Astrocyte of the cerebellum (primary cell): ENCODE measurements at regions of chr7 and their contacts with region 1.

Region 1: DNA sequence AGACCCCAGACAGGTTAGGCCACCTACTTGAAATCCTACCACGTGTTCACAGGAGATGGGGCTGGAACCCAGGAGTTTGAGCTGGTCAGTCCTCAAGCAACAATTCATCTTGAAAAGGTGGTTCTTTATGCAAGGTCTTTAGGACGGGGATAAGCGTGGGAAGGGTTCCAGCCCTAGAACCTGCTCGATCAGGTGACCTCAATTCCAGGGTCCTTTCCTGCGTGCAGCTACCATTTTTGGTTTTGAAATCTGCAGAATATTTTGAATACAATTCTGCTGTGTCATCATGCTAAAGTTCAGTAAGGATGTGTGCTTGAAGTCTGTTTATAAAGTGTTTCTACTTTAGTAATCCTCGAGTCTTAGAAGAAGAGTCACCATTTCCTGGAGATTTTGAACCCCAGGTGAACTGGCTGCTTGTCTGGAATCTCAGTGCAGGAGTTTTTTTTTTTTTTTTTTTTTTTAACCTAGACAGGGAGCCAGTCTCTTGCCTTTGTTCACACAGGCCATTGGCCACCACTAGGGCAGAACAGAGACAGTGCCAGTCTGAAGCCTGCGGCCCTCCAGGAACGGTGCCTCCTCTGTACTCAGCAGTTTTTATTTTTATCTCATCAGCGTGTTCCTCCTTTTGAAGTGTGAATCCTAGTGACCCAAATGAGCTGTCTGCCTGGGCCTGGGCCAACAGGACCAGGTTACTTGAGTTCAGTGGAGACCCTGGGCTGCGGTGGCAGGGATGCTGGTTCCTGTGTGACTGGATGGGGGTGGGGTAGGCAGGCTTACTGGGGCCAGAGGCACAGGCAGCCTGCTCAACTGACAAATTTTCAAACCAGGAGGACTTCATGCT is 54.6 kb downstream of the EEPD1 start:
- DNase-seq: no peak
- H3K4me3 ChIP-seq: no peak overlapping the region
- CTCF ChIP-seq: no peak

Region 2: GRCh38 chr7:36128448-36129047 is 79.1 kb before region 1 on chr7:
- in situ Hi-C with region 1: no loop called
- DNase-seq: peak; percentile 93
- H3K4me3 ChIP-seq: no peak overlapping the region
- CTCF ChIP-seq: peak; percentile 61

Region 3: GRCh38 chr7:36250317-36250716 is 42.6 kb after region 1 on chr7:
- in situ Hi-C with region 1: loop called (anchors 5 kb)
- DNase-seq: no peak
- H3K4me3 ChIP-seq: no peak overlapping the region
- CTCF ChIP-seq: no peak

Region 4: DNA sequence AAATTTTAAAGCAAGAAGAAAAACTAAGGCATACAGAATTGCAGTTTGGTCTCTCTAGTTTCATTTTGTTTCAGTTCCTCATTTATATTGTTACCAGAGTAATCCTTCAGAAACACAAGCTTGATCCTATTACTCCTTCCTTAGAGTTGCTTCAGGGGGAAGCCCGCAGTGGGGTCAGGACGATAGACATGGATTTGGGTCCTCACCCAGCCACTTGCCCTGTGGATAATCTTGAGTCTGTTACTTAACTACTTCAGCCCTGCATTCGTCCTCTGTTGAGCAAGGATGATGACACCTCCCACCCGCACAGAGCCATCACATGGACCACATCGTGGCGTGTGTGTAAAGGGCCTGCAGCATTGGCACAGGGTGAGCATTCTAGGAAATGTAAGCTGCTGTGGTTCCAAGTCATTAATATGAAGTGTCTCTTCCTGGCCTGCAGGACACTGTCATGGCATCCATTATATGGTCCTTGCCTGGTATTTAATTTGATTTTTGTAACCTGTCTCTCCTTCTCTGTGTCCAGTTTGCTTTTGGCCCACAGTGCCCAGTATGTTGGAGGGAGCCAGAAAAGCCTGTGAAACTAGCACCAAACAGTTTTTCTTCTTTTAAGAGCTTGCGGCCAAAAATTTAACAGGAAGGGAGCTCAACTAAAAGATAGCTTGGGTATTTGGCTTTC is 56.6 kb after region 1 on chr7:
- in situ Hi-C with region 1: no loop called
- DNase-seq: no peak
- H3K4me3 ChIP-seq: no peak overlapping the region
- CTCF ChIP-seq: no peak

Region 5: DNA sequence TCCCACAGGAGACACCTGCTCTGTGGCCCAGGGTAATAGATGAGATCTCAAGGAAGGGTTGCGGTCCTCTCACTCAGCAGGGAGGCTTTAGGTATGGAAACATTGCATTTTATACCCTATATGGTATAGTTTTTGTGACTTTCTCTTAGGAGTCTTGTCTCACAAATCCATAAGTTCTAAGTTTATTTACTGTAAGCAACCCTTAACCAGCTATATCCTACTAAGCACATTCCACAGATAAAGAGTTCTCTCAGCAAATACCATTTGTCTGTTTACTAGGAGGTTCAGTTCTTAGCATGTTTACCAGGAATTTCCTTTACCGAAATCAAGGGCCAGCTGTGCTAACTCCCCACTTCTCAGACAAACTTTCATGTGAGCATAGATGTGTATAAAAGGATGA is 248.9 kb after region 1 on chr7:
- in situ Hi-C with region 1: no loop called
- DNase-seq: no peak
- H3K4me3 ChIP-seq: no peak overlapping the region
- CTCF ChIP-seq: no peak